ENCODE measurements at regions of chr11 and their contacts with region 1.

Region 1: GRCh38 chr11:8033305-8034105 is 46.4 kb downstream of the EIF3F start:
- DNase-seq: no peak
- H3K4me3 ChIP-seq: no peak overlapping the region
- H3K27ac ChIP-seq: no peak overlapping the region
- H3K4me1 ChIP-seq: peaks cover 9 to 43% (median 13%) of the 10 kb centered on the region in 4 donors
- H3K27me3 ChIP-seq: peaks cover 0 to 13% (median 0%) of the 10 kb centered on the region in 4 donors
- CTCF ChIP-seq: peak; percentile 82 to 95 (median 93)
- EP300 ChIP-seq: no peak
- POLR2A ChIP-seq: no peak

Region 2: DNA sequence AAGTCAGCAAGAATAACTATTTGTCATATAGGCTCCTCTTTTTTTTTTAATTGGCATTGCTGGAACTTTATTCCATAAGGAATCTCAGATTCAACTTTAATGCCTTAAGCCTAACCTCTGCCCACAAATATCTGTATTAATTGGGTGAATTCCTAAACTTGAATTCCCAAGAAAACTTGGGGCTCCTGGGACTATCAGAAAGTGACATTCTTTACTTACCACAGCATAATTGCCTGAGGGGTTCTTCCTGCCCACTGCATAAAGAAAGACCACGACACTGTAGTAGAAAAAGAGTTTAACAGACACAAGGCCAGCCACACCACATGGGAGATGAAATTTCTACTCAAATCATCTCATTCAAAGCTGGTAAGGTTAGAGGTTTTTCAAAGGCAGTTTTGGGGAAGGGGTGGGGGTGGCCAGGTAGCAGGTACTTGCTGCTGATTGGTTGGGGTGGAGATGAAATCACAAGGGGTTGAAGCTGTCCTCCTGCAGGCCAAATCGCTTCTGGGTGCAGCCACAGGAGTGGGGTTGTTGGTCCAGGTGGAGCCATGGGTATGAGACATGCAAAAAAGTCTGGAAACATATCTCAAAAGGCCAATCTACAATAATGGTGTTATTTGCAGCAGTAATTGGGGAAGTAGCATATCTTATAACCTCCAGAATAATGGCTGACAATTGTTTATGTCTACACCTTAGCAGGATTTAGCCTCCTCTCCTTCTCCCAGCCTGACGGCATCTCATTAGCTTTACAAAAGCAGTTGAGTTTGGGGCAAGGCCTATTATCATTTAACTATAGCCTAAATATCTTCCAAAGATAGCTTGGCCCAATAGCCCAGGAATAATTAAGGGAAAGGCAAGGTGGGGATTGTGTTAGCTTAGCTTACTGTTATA is 63.5 kb before region 1 on chr11:
- intact Hi-C with region 1: no loop called
- DNase-seq: no peak
- H3K4me3 ChIP-seq: no peak overlapping the region
- H3K27ac ChIP-seq: no peak overlapping the region
- H3K4me1 ChIP-seq: no peaks in the 10 kb centered on the region
- H3K27me3 ChIP-seq: no peaks in the 10 kb centered on the region
- CTCF ChIP-seq: no peak
- EP300 ChIP-seq: no peak
- POLR2A ChIP-seq: no peak

Region 3: GRCh38 chr11:8068605-8069221 is 35.2 kb after region 1 on chr11:
- intact Hi-C with region 1: loop called (anchors 5 kb)
- DNase-seq: no peak
- H3K4me3 ChIP-seq: peak overlapping the region in 2 of 4 donors; percentile 23 to 34
- H3K27ac ChIP-seq: peak overlapping the region; percentile 34 to 75 (median 51)
- H3K4me1 ChIP-seq: peaks cover 29 to 46% (median 41%) of the 10 kb centered on the region in 4 donors
- H3K27me3 ChIP-seq: no peaks in the 10 kb centered on the region
- CTCF ChIP-seq: no peak
- EP300 ChIP-seq: no peak
- POLR2A ChIP-seq: no peak

Region 4: DNA sequence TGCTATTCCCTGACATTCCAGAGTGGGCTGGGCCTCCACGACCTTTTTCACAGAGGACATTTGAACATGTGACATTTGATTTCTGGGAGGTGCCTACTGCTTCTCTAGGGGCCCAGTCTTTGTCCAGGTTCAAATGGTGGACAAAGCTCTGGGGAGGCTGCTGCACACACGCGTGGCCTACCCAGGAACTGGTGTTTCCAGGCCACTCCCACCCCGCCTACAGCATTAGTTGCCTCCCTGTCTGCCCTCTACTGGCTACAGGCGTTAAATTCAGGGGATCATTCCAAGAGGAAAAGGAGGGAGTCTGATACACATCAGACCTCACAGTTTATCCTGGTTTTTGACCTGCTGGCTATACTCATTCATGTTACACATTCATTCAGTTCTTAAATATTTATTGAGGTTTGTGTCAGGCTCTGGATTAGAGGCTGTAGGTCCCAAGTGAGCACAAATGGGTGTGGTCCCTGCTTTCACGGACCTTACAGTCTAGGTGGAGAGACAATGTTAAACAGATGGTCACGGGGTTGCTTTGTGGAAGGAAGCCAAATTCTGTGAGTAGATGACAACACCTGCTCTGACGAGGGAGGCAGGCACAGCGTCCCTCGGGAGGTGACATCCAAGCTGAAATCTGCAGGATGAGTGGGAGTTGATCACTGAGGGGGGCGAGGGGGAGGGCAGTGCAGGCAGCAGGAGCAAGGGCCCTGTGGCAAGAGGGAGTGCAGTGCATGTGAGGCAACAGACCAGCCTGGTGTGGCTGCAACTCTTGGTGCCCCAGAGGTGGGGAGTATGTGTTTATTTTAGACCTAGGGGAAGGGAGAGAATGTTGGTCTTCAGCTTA is 59.3 kb after region 1 on chr11:
- intact Hi-C with region 1: loop called (anchors 5 kb)
- DNase-seq: no peak
- H3K4me3 ChIP-seq: no peak overlapping the region
- H3K27ac ChIP-seq: no peak overlapping the region
- H3K4me1 ChIP-seq: peaks cover 9 to 15% (median 12%) of the 10 kb centered on the region in 4 donors
- H3K27me3 ChIP-seq: no peaks in the 10 kb centered on the region
- CTCF ChIP-seq: peak; percentile 49 to 67 (median 64)
- EP300 ChIP-seq: no peak
- POLR2A ChIP-seq: no peak

Measured in esophagus muscularis mucosa (tissue), 4 donors.